ENCODE measurements at regions of chrX and their contacts with region 1.

Region 1: GRCh38 chrX:41333744-41334259 is at the start of gene DDX3X:
- DNase-seq: peak; percentile 64 to 94
- ATAC-seq: peak; percentile 66 to 70
- H3K4me3 ChIP-seq: peak within 1 kb of the TSS; percentile 95
- H3K27ac ChIP-seq: peak within 1 kb of the TSS; percentile 97 to 100
- H3K4me1 ChIP-seq: peaks cover 21% of the 10 kb centered on the region
- CTCF ChIP-seq: no peak
- EP300 ChIP-seq: no peak
- POLR2A ChIP-seq: peak; percentile 99
- RAD21 ChIP-seq: no peak; a peak in 1 of 5 replicates
- polyA plus RNA-seq, gene DDX3X: 187 and 216 TPM in 2 replicates

Region 2: GRCh38 chrX:41275661-41276609 is 57.9 kb before region 1 on chrX:
- CTCF ChIA-PET with region 1: interaction called, 35 read pairs
- POLR2A ChIA-PET with region 1: interaction called, 5 read pairs
- DNase-seq: peak; percentile 81 to 84
- ATAC-seq: peak; percentile 96 to 97
- H3K4me3 ChIP-seq: peak overlapping the region; percentile 54
- H3K27ac ChIP-seq: peak overlapping the region; percentile 93 to 98
- H3K4me1 ChIP-seq: peaks cover 7% of the 10 kb centered on the region
- CTCF ChIP-seq: peak; percentile 60
- EP300 ChIP-seq: no peak
- POLR2A ChIP-seq: peak; percentile 45
- RAD21 ChIP-seq: peak; percentile 72 to 87

Region 3: DNA sequence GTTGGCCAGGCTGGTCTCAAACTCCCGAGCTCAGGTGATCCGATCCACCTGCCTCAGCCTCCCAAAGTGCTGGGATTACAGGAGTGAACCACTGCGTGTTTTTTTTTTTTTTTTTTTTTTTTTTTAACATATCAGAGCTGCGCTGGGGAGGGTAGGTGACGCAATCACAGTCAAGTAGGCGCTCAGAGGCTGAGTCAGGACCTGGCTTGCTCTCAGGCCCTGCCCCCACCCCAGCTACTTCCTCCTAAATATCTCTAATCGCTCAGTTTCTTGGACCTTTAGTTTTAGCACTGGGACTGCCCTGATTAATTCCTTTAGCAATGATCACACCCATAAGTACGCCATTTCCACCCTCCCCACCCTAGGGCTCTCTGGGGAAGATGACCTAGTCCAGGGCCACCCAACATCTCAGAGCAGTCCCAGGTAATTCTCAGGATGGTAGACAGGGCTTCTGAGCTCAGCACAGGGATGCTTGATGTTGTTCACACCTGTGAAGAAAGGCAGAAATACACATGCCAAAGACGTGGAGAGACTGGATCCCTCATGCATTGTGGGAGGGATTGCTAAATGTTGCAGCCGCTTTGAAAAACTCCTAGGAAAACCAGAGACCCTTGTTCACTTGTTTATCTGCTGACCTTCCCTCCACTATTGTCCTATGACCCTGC is 50.4 kb after region 1 on chrX:
- CTCF ChIA-PET with region 1: no interaction called
- POLR2A ChIA-PET with region 1: interaction called, 19 read pairs
- DNase-seq: peak in 1 of 2 experiments; percentile 89
- ATAC-seq: peak; percentile 72 to 79
- H3K4me3 ChIP-seq: peak overlapping the region; percentile 3; the same call in 1 of the 3 replicates
- H3K27ac ChIP-seq: peak overlapping the region; percentile 90 to 91
- H3K4me1 ChIP-seq: peaks cover 48% of the 10 kb centered on the region
- CTCF ChIP-seq: no peak
- EP300 ChIP-seq: no peak
- POLR2A ChIP-seq: no peak
- RAD21 ChIP-seq: 0 out of 5 replicates have a peak, but pooled peaks of 1 of the 2 experiments have one; percentile 19

Region 4: DNA sequence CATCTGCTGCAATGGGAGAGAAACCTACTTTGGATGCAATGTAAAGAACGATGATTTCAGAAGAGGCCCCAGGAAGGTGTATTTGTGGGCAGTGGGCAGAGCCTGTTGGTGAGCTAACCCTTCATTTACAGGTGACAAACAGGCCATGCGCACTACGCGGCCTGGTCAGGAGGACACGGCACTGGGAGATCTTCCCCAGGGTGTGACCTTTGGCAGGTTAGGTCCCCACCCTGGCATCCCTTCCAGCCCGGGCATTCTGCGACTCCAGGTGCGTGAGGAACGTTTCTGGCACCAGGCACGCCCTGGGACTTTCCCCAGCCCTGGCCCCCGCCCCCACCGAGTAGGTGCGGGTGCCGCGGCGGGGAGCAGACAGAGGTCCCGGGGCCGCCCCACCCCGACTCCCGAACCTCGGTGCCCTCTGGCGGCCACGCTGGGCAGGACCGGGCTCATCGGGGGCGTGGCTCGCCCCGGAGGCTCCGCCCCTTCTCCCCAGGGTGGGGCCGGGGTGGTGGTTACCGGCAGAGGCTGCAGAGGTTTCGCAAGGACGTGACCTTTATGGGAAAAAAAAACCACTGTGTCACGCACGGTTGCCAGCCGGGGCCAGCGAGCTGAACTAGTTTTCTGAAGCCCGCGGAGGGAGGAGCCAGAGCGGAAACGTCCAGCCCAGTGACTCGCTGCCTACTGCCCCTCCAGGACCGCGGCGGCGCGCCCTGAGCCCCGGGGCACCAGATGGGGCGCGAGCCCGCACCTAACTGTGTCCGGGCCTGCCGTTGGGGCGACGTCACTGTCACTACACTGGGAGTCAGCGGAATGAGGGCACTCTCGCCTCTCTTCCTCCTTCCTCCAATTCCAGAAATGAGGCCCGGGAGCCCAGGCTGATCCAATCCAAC is 108.4 kb after region 1 on chrX:
- CTCF ChIA-PET with region 1: interaction called, 6 read pairs
- POLR2A ChIA-PET with region 1: interaction called, 13 read pairs
- DNase-seq: peak; percentile 76 to 94
- ATAC-seq: peak; percentile 94
- H3K4me3 ChIP-seq: peak overlapping the region; percentile 36
- H3K27ac ChIP-seq: peak overlapping the region; percentile 90 to 97
- H3K4me1 ChIP-seq: peaks cover 17% of the 10 kb centered on the region
- CTCF ChIP-seq: peak; percentile 71
- EP300 ChIP-seq: peak in 1 of 2 experiments; percentile 38; a peak in 1 of 5 replicates
- POLR2A ChIP-seq: peak; percentile 63
- RAD21 ChIP-seq: peak; percentile 53 to 90

Measured in A549 (cell line).